ENCODE measurements at regions of chr3 and their contacts with region 1.

Region 1: DNA sequence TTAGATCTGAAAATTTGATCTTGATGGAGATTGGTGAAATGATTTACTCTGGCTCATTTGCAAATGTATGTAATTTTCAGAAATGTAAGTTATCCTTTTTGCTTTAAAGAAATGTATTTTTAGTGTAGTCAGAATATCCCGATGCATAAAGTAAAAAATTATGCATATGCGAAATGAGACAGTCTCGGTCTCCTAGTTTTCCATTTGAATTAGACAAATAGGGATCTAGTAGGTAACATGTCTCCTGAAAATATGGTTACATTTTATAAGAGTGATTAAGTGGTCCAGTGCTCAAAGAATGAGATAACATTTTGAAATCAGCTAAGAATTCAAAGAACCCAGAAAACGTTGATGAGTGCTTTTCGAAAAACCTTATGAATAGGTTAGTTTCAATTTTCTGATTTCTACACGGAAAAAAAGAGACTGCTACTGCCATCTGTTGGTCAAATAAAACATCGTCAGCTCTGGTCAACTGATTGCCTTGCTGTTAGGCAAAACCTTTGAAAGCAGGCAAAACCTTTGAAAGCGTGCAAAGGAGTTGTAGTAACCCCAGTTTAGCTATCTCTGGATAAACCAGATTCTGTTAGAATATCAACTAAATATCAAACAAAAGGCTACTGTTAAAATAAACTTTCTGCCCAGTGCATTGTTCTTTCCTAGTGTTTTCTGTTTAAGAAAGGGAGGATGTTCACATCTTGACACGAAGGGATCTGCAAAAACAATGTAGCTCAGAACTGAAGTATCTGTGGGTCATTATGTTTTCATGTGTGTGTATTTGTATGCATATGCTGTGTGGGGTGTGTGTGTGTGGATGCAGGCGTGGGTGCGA is 59.3 kb upstream of the CHMP2B start:
- DNase-seq: peak; percentile 84
- ATAC-seq: peak; percentile 81
- H3K4me3 ChIP-seq: peak overlapping the region; percentile 67
- H3K27ac ChIP-seq: no peak overlapping the region
- H3K4me1 ChIP-seq: no peaks in the 10 kb centered on the region
- H3K27me3 ChIP-seq: no peaks in the 10 kb centered on the region
- CTCF ChIP-seq: peak; percentile 86

Region 2: DNA sequence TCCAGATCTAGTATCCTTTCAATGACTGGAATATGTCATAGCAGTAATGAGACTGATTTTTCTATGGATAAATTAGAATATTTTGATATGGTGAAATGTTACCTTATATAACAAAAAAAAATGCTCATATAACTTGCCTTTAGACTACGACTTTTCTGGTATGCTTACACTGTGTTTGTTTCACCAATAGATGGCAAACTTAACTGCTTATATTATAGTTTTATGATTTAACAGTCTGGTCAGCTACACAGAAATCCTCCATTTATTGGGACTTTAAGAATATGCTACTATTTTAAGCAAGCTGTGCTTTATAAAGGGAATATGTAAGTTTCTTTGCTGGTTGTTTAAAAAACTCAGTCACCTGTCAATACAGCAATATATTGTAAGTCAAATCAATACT is 382.5 kb before region 1 on chr3:
- CTCF ChIA-PET with region 1: no interaction called
- POLR2A ChIA-PET with region 1: no interaction called
- intact Hi-C with region 1: loop called (anchors 2 kb)
- DNase-seq: peak; percentile 54
- ATAC-seq: peak; percentile 82
- H3K4me3 ChIP-seq: no peak overlapping the region
- H3K27ac ChIP-seq: no peak overlapping the region
- H3K4me1 ChIP-seq: peaks cover 10% of the 10 kb centered on the region
- H3K27me3 ChIP-seq: no peaks in the 10 kb centered on the region
- CTCF ChIP-seq: peak; percentile 71

Region 3: GRCh38 chr3:86990734-86991481 is 176.9 kb before region 1 on chr3 and contains the start of gene VGLL3:
- CTCF ChIA-PET with region 1: interaction called, 3 read pairs
- POLR2A ChIA-PET with region 1: no interaction called
- intact Hi-C with region 1: loop called (anchors 5 kb)
- DNase-seq: peak; percentile 55
- ATAC-seq: peak; percentile 70
- H3K4me3 ChIP-seq: peak within 1 kb of the TSS; percentile 85
- H3K27ac ChIP-seq: peak within 1 kb of the TSS; percentile 4; the same call in 1 of the 2 replicates
- H3K4me1 ChIP-seq: peaks cover 42% of the 10 kb centered on the region
- H3K27me3 ChIP-seq: no peaks in the 10 kb centered on the region
- CTCF ChIP-seq: 0 out of 2 replicates have a peak, but pooled peaks have one; percentile 10
- total RNA-seq, gene VGLL3: 1.3 and 1.8 TPM in 2 replicates

Region 4: GRCh38 chr3:87041191-87041590 is 126.7 kb before region 1 on chr3:
- CTCF ChIA-PET with region 1: no interaction called
- POLR2A ChIA-PET with region 1: no interaction called
- intact Hi-C with region 1: loop called (anchors 2 kb)
- DNase-seq: peak; percentile 48
- ATAC-seq: peak; percentile 59
- H3K4me3 ChIP-seq: no peak overlapping the region
- H3K27ac ChIP-seq: no peak overlapping the region
- H3K4me1 ChIP-seq: peaks cover 13% of the 10 kb centered on the region
- H3K27me3 ChIP-seq: no peaks in the 10 kb centered on the region
- CTCF ChIP-seq: peak; percentile 50; the same call in 1 of the 2 replicates

Region 5: GRCh38 chr3:87120881-87121280 is 47.0 kb before region 1 on chr3:
- CTCF ChIA-PET with region 1: no interaction called
- POLR2A ChIA-PET with region 1: no interaction called
- intact Hi-C with region 1: loop called (anchors 2 kb)
- DNase-seq: no peak
- ATAC-seq: peak; percentile 8; the same call in 1 of the 2 replicates
- H3K4me3 ChIP-seq: 0 out of 2 replicates have a peak overlapping the region, but pooled peaks have one; percentile 14
- H3K27ac ChIP-seq: peak overlapping the region; percentile 59
- H3K4me1 ChIP-seq: peaks cover 16% of the 10 kb centered on the region
- H3K27me3 ChIP-seq: no peaks in the 10 kb centered on the region
- CTCF ChIP-seq: no peak

Region 6: GRCh38 chr3:87227104-87227834 is 59.4 kb after region 1 on chr3 and contains the start of gene CHMP2B:
- CTCF ChIA-PET with region 1: interaction called, 3 read pairs
- POLR2A ChIA-PET with region 1: interaction called, 3 read pairs
- intact Hi-C with region 1: loop called (anchors 1 kb)
- DNase-seq: peak; percentile 96
- ATAC-seq: peak; percentile 83
- H3K4me3 ChIP-seq: peak within 1 kb of the TSS; percentile 87
- H3K27ac ChIP-seq: peak within 1 kb of the TSS; percentile 90
- H3K4me1 ChIP-seq: peaks cover 25% of the 10 kb centered on the region; the same call in 1 of the 2 replicates
- H3K27me3 ChIP-seq: no peaks in the 10 kb centered on the region
- CTCF ChIP-seq: no peak
- total RNA-seq, gene CHMP2B: 40.1 and 49.4 TPM in 2 replicates

Region 7: DNA sequence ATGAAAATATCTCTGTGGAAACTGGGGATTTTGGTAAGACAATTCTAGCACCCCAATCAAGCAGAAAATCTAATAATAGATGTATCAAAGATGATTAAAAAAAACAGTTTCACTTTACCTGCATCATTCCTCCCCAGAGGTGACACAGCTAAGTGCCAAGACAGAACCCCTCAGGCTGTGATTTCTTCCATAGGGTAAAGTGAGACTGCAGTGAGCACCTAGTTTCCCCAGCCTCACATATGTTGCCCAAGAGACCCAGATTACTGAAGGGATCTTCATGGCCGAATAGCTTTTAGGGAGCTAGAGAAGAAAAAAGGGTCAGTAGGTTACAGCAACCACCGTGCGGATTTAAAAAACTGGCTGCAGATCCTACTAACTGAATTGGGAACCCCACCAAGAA is 212.9 kb after region 1 on chr3:
- CTCF ChIA-PET with region 1: no interaction called
- POLR2A ChIA-PET with region 1: no interaction called
- intact Hi-C with region 1: no loop called
- DNase-seq: no peak
- ATAC-seq: no peak
- H3K4me3 ChIP-seq: no peak overlapping the region
- H3K27ac ChIP-seq: no peak overlapping the region
- H3K4me1 ChIP-seq: no peaks in the 10 kb centered on the region
- H3K27me3 ChIP-seq: no peaks in the 10 kb centered on the region
- CTCF ChIP-seq: no peak

Region 8: DNA sequence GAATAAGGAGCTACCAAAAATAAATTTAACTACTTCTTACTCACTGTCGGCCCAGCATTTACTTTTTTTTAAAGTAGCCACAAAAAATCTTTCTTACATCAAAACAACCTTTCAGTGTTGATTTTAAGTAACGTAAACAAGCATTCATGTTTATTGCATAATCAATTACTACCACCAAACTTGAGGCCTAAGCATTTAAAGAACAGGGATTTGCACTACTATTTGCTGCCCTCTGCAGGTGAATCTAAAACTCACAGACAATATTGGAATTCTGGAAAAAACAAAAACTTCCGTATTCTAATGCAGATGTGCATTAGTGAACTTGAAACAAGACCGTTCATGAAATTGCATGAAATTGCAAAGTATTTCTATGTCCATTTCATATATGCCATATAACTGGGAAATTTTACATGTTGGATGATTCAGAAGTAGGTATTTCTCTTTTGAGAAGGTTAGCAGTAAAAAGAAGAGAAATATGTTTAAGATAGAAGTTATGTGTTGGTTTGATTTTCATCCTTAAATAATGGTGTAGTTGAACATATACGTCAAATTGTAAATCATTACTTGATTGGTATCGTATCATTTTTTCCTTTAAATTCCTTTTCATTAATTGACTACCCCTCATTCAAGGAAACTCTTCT is 835.4 kb after region 1 on chr3:
- CTCF ChIA-PET with region 1: interaction called, 4 read pairs
- POLR2A ChIA-PET with region 1: no interaction called
- intact Hi-C with region 1: loop called (anchors 1 kb)
- DNase-seq: peak; percentile 77
- ATAC-seq: peak; percentile 45; the same call in 1 of the 2 replicates
- H3K4me3 ChIP-seq: no peak overlapping the region
- H3K27ac ChIP-seq: no peak overlapping the region
- H3K4me1 ChIP-seq: no peaks in the 10 kb centered on the region
- H3K27me3 ChIP-seq: no peaks in the 10 kb centered on the region
- CTCF ChIP-seq: peak; percentile 94

Measured in PC-3 (cell line).